ENCODE measurements at regions of chr2 and their contacts with region 1.

Region 1: GRCh38 chr2:159712143-159712928 is at the start of gene MARCHF7:
- DNase-seq: peak; percentile 97
- ATAC-seq: peak; percentile 93
- H3K4me3 Mint-ChIP-seq: peak within 1 kb of the TSS; percentile 99
- H3K27ac Mint-ChIP-seq: peak within 1 kb of the TSS; percentile 99
- H3K4me1 Mint-ChIP-seq: peaks cover 56% of the 10 kb centered on the region
- H3K27me3 Mint-ChIP-seq: no peaks in the 10 kb centered on the region
- CTCF ChIP-seq: no peak
- total RNA-seq, gene MARCHF7: 86.7 and 89.5 TPM in 2 replicates

Region 2: DNA sequence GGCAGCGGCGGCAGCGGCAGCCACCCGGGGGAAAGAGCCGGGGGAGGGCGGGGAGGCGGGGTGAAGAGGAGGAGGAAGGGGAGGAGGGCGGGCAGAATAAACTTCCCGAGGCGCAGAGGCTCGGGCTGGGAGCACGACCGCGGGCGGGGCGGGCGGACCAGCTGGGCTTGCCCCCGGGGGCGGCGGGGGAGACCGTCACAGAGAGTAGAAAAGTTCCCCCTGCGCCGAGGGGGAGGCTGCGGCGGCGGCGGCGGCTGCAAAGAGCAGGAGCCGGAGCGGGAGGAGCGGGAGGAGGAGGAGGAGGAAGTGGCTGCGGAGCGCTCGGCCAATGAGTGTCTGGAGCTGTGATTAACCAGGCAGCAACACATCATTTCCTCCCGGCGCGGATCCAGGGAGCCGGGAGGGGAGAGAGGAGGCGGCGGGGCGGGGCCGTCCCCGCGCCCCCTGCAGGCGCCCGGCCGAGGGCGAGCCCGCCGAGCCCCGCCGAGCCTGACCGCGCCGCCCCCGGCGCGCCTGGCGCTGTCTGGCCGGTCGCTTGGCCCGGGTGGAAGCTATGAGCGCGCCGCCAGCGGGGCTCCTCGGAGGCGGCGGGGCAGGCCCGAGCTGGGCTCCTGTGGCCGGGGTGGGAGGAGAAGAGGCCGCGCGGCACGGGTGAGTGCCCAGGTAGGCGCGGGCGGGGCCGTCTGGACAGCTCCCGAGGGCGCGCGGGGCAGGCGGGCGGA is 1836.1 kb before region 1 on chr2 and contains the start of gene ACVR1:
- CTCF ChIA-PET with region 1: no interaction called
- POLR2A ChIA-PET with region 1: no interaction called
- intact Hi-C with region 1: loop called (anchors 10 kb)
- DNase-seq: peak; percentile 76
- ATAC-seq: peak; percentile 80
- H3K4me3 Mint-ChIP-seq: peak within 1 kb of the TSS; percentile 88
- H3K27ac Mint-ChIP-seq: peak within 1 kb of the TSS; percentile 76
- H3K4me1 Mint-ChIP-seq: peaks cover 21% of the 10 kb centered on the region
- H3K27me3 Mint-ChIP-seq: no peaks in the 10 kb centered on the region
- CTCF ChIP-seq: no peak
- total RNA-seq, gene ACVR1: 4.4 and 4.6 TPM in 2 replicates

Region 3: GRCh38 chr2:158903711-158904443 is 808.5 kb before region 1 on chr2:
- CTCF ChIA-PET with region 1: no interaction called
- POLR2A ChIA-PET with region 1: no interaction called
- intact Hi-C with region 1: loop called (anchors 1 kb)
- DNase-seq: no peak
- ATAC-seq: no peak
- H3K4me3 Mint-ChIP-seq: no peak overlapping the region
- H3K27ac Mint-ChIP-seq: no peak overlapping the region
- H3K4me1 Mint-ChIP-seq: no peaks in the 10 kb centered on the region
- H3K27me3 Mint-ChIP-seq: peaks cover 2% of the 10 kb centered on the region
- CTCF ChIP-seq: no peak

Region 4: DNA sequence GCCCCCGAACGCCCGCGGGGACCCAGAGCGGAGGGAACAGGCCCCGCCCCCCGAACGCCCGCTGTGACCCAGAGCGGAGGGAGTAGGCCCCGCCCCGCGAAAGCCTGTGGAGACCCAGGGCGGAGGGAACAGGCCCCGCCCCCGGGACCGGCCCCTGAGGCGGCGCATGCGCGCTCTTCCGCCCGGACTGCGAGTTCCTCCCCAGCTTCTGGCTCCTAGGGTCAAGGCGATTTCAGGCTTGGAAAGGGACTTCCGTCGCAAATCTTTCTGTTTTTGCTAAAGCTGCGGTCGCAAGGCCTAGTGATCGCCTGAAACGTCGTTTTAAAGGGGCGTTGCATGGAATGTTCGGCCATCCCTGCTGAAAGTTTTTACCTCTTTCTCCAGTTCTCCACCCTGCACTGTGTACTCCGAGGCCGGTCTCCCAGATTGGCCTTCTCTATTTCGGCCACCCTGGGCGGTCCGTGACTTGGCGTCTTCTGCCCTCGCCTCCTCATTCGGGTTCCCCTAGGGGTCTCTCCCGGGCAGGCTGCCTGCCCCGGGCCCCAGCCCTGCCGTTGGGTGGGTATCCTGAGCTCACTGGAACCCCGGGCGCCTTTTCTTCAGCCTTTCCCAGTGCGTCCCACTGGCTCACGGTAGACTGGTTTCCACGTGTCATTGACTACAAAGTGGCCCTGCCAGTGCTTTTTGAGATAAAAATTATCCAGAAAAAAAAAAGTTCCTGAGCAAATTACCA is 425.5 kb before region 1 on chr2:
- CTCF ChIA-PET with region 1: interaction called, 3 read pairs
- POLR2A ChIA-PET with region 1: interaction called, 31 read pairs
- intact Hi-C with region 1: loop called (anchors 1 kb)
- DNase-seq: peak; percentile 97
- ATAC-seq: peak; percentile 99
- H3K4me3 Mint-ChIP-seq: peak overlapping the region; percentile 93
- H3K27ac Mint-ChIP-seq: peak overlapping the region; percentile 84
- H3K4me1 Mint-ChIP-seq: peaks cover 41% of the 10 kb centered on the region
- H3K27me3 Mint-ChIP-seq: peaks cover 2% of the 10 kb centered on the region
- CTCF ChIP-seq: no peak

Region 5: GRCh38 chr2:159615140-159615951 is 97.0 kb before region 1 on chr2:
- CTCF ChIA-PET with region 1: no interaction called
- POLR2A ChIA-PET with region 1: interaction called, 10 read pairs
- intact Hi-C with region 1: loop called (anchors 1 kb)
- DNase-seq: peak; percentile 43
- ATAC-seq: peak; percentile 61
- H3K4me3 Mint-ChIP-seq: peak overlapping the region; percentile 84
- H3K27ac Mint-ChIP-seq: peak overlapping the region; percentile 68
- H3K4me1 Mint-ChIP-seq: peaks cover 16% of the 10 kb centered on the region
- H3K27me3 Mint-ChIP-seq: peaks cover 11% of the 10 kb centered on the region
- CTCF ChIP-seq: no peak

Region 6: GRCh38 chr2:159840616-159841015 is 128.3 kb after region 1 on chr2:
- CTCF ChIA-PET with region 1: no interaction called
- POLR2A ChIA-PET with region 1: no interaction called
- intact Hi-C with region 1: no loop called
- DNase-seq: no peak
- ATAC-seq: no peak
- H3K4me3 Mint-ChIP-seq: no peak overlapping the region
- H3K27ac Mint-ChIP-seq: no peak overlapping the region
- H3K4me1 Mint-ChIP-seq: no peaks in the 10 kb centered on the region
- H3K27me3 Mint-ChIP-seq: no peaks in the 10 kb centered on the region
- CTCF ChIP-seq: no peak

Region 7: DNA sequence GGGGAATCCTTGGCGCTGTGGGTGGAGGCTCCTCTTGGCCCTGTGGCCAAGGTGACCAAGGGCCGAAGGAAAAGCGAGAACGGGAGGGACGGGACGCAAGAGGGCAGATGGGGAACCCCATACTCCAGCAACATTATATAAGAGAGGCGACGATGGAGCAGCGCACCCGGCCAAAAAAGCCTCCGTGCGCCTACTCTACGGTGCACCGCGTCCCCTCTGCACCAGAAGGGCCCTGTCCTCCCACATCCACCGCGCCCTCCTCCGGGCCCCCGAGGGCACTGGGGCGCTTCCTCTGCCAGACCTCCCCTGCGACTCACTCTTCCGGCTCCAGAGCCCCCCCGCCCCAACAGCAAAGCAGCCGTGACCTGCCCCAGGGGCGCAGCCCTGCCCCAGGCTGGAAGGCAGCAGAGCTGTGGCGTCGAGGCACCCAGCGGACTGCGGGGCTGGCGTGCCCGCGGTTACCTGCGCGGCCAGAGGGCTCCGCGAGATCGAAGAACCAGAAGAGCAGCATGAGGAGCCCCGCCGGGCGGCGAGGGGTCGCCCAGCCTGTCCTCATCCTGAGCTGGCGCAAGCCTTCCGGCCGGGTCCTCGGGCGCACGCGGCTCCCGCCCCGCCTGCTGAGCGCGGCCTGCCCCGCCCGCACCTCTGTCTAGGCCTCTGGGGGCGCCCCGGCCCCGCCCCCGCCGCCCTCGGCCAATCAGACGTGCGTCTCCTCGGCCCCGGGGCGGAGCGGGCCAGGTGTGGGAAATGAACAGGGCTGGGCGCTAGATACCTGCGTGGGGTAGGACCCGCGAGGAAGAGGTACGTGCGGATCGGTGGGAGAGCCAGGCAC is 192.0 kb after region 1 on chr2:
- CTCF ChIA-PET with region 1: no interaction called
- POLR2A ChIA-PET with region 1: interaction called, 8 read pairs
- intact Hi-C with region 1: loop called (anchors 2 kb)
- DNase-seq: peak; percentile 87
- ATAC-seq: peak; percentile 85
- H3K4me3 Mint-ChIP-seq: peak within 1 kb of the TSS; percentile 99
- H3K27ac Mint-ChIP-seq: peak within 1 kb of the TSS; percentile 98
- H3K4me1 Mint-ChIP-seq: peaks cover 57% of the 10 kb centered on the region
- H3K27me3 Mint-ChIP-seq: no peaks in the 10 kb centered on the region
- CTCF ChIP-seq: no peak

Region 8: DNA sequence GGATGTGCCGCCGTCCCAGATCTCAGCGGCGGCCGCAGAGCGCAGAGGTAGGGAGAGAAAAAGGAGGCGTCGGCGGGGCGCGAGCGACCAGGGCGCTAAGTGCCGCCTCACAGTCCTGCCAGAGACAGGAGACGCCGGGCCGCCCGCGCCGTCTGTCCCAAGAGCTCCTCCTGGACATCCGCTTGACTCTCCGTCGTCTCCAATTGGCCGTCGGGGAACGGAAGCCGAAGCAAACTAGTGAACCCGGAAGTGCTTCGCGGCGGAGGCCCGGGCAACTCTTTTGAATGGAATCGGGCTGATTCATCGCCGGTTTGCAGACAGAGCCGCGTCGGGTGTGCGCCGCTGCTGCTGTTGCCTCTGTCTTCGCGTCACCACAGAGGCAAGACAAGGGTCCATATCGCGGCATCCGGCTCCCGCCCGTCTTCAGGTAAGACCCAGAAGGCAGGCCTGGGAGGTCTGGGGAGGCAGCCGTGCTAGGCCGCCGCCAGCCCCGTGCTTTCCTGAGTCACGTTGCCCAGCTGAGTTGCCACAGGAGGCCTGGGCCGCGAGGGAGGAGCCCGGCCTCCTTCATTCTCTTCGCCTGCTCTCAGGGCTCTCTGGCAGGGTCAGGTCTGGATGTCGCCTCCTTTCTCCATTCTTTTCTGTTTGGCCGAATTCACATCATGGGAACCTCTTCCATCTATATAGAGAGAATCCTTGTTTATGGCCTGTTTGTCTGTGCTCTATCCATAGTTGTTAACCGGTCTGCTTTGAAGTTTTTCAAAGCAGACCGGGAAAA is 1596.0 kb after region 1 on chr2 and contains the start of gene PSMD14:
- CTCF ChIA-PET with region 1: no interaction called
- POLR2A ChIA-PET with region 1: no interaction called
- intact Hi-C with region 1: loop called (anchors 2 kb)
- DNase-seq: peak; percentile 80
- ATAC-seq: peak; percentile 92
- H3K4me3 Mint-ChIP-seq: peak within 1 kb of the TSS; percentile 99
- H3K27ac Mint-ChIP-seq: peak within 1 kb of the TSS; percentile 97
- H3K4me1 Mint-ChIP-seq: peaks cover 33% of the 10 kb centered on the region
- H3K27me3 Mint-ChIP-seq: no peaks in the 10 kb centered on the region
- CTCF ChIP-seq: no peak
- total RNA-seq, gene PSMD14: 55.0 and 55.1 TPM in 2 replicates